ENCODE measurements at regions of chr3 and their contacts with region 1.

Region 1: DNA sequence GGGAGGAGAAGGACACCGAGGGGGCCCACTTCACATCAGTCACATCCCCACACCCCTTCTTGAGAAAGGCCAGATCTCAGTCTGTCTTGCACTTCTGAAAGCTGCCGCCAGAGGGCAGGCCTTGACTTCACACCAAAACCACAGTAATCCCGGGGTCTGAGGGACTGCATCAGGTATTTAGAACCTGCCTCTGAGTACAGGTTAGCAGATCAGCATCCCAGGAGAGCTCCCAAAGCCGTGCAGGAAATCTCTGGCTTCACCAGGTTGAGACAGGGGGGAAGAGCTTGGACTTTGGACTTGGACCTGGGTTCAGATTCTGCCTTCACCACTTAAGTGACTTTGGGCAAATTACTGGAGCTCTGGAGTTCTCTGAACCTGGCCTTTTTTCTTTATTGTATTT is 50.3 kb downstream of the LHFPL4 start:
- DNase-seq: peak; percentile 47 to 87 (median 72)
- H3K4me3 ChIP-seq: no peak overlapping the region
- H3K27ac ChIP-seq: no peak overlapping the region
- H3K27me3 ChIP-seq: peaks cover 0 to 3% (median 0%) of the 10 kb centered on the region in 45 donors
- CTCF ChIP-seq: peak; percentile 73 to 95 (median 84)

Region 2: DNA sequence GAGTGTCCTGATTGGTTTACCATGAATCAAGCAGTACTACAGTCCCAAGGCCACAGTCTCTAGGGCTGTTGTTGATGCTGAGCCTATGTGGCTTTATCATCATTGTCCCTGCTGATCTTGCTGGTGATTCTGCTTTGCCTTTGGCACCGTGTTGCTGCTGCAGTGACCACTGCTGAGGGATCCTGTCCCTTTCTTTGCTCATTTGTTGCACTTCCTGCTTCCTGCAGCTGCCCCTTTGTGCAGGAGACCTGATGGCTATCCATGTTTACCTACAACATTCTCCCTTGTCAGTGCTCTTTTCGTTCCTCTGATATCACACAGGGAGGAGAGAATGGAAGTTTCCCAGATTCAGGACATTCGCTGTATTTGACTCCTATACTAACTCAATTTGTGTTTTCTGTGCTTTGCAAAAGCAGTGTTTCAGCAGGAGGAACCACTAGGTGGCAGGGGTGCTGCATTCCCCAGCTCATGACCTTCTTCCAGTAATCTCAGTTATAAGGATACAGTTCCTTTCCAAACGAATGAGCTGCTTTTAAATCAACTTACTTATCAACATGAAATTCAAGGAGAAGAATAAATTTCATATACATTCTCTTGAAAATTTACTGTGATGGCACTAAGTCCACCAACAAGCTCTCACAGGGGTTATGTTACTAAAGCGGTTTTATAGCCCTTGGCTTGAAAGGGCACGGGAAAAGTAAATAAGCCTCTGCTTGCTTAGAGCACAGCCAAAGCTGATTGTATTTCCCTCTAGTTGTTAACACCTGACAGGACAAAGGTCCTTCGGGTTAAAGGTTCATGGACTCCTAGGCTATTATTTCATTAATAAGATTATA is 150.1 kb before region 1 on chr3:
- intact Hi-C with region 1: loop called in 1 of 2 experiments (anchors 2 kb)
- DNase-seq: peak; percentile 53 to 87 (median 72)
- H3K4me3 ChIP-seq: no peak overlapping the region
- H3K27ac ChIP-seq: peak overlapping the region in 7 of 59 donors; percentile 2 to 49 (median 39)
- H3K27me3 ChIP-seq: no peaks in the 10 kb centered on the region
- CTCF ChIP-seq: peak; percentile 65 to 94 (median 86)

Region 3: GRCh38 chr3:9448643-9449042 is 54.6 kb before region 1 on chr3:
- intact Hi-C with region 1: no loop called
- DNase-seq: no peak
- H3K4me3 ChIP-seq: no peak overlapping the region
- H3K27ac ChIP-seq: peak overlapping the region in 37 of 59 donors; percentile 2 to 72 (median 42)
- H3K27me3 ChIP-seq: no peaks in the 10 kb centered on the region
- CTCF ChIP-seq: peak in 2 of 56 donors; percentile 17 to 21

Region 4: GRCh38 chr3:9731206-9732079 is 228.2 kb after region 1 on chr3 and contains the start of gene BRPF1:
- intact Hi-C with region 1: loop called (anchors 5 to 10 kb)
- DNase-seq: peak; percentile 98 to 100 (median 99)
- H3K4me3 ChIP-seq: peak within 1 kb of the TSS; percentile 70 to 100 (median 97)
- H3K27ac ChIP-seq: peak within 1 kb of the TSS; percentile 74 to 99 (median 97)
- H3K27me3 ChIP-seq: no peaks in the 10 kb centered on the region
- CTCF ChIP-seq: peak in 37 of 56 donors; percentile 10 to 64 (median 30)
- total RNA-seq, gene BRPF1: 10.7 to 25.9 (median 16.3) TPM

Measured in dorsolateral prefrontal cortex (tissue), 120 donors.